Posterior vena cava (tissue), 2 donors: ENCODE measurements at regions of chr15 and their contacts with region 1.

Region 1: GRCh38 chr15:75684642-75685041 is 28.0 kb downstream of the CSPG4 start:
- DNase-seq: no peak

Region 2: GRCh38 chr15:75723847-75724660 is 39.4 kb after region 1 on chr15:
- intact Hi-C with region 1: loop called in 1 of 2 experiments (anchors 5 kb)
- DNase-seq: peak; percentile 98

Region 3: GRCh38 chr15:75738647-75739331 is 54.1 kb after region 1 on chr15:
- intact Hi-C with region 1: loop called (anchors 5 to 10 kb)
- DNase-seq: peak; percentile 98

Region 4: DNA sequence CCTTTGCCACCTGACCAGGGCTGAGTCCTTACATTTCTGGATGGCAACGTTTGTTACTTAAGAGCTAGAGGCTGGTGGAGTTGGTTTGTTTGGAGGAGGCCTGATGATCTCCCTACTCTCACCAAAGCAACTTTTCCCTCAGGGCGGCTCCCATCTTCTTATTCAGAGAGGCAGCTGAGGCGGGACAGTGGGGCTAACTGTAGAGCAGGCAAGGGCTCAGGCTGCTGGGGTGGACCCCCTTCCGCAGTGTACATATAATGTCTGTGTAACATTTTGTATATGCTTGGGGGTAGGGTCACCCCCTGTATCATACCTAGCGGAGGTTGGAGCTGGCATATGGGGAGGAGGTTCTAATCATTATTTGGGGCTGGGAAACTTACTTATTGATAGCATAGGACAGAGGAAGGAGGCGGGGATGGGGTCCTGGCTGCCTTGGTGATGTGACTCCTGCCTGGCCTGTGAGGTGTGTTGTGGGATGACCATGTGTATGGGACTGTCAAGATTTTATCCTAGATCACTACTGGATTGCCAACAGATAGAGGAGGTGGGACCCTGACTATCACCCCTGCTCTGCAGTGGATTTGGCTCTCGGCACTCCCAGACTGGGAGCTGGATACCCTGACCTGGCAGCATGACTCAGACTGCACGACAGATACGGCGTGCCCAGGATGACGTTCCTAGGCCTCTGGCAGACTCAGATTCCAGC is 106.1 kb after region 1 on chr15:
- intact Hi-C with region 1: loop called in 1 of 2 experiments (anchors 10 kb)
- DNase-seq: no peak